ENCODE measurements at regions of chr14 and their contacts with region 1.

Region 1: GRCh38 chr14:94689218-94689984 is 77.2 kb downstream of the SERPINA3 start:
- DNase-seq: peak; percentile 38 to 68
- ATAC-seq: peak; percentile 89 to 95 (median 92)
- H3K4me3 ChIP-seq: peak overlapping the region in 4 of 10 donors; percentile 13 to 34 (median 16)
- H3K27ac ChIP-seq: no peak overlapping the region
- H3K4me1 ChIP-seq: peaks cover 0 to 10% (median 4%) of the 10 kb centered on the region in 9 donors
- H3K27me3 ChIP-seq: peaks cover 0 to 32% (median 20%) of the 10 kb centered on the region in 7 donors
- CTCF ChIP-seq: peak; percentile 85 to 99 (median 96)

Region 2: GRCh38 chr14:94748667-94749347 is 59.4 kb after region 1 on chr14:
- intact Hi-C with region 1: loop called in 1 of 10 experiments (anchors 5 kb)
- DNase-seq: no peak
- ATAC-seq: no peak
- H3K4me3 ChIP-seq: no peak overlapping the region
- H3K27ac ChIP-seq: no peak overlapping the region
- H3K4me1 ChIP-seq: peaks cover 0 to 5% (median 0%) of the 10 kb centered on the region in 9 donors
- H3K27me3 ChIP-seq: peaks cover 0 to 25% (median 7%) of the 10 kb centered on the region in 7 donors
- CTCF ChIP-seq: peak in 7 of 9 donors; percentile 34 to 60 (median 54)

Region 3: GRCh38 chr14:95098984-95099599 is 409.7 kb after region 1 on chr14:
- intact Hi-C with region 1: loop called (anchors 2 to 10 kb)
- DNase-seq: peak; percentile 57 to 65
- ATAC-seq: peak in 7 of 8 donors; percentile 66 to 85 (median 72)
- H3K4me3 ChIP-seq: no peak overlapping the region
- H3K27ac ChIP-seq: no peak overlapping the region
- H3K4me1 ChIP-seq: peaks cover 0 to 32% (median 17%) of the 10 kb centered on the region in 9 donors
- H3K27me3 ChIP-seq: no peaks in the 10 kb centered on the region
- CTCF ChIP-seq: peak; percentile 64 to 86 (median 75)

Measured in heart right ventricle (tissue), 16 donors.